A549 (cell line): ENCODE measurements at regions of chr11 and their contacts with region 1.

Region 1: GRCh38 chr11:45110562-45110961 is 35.9 kb upstream of the PRDM11 start:
- DNase-seq: peak; percentile 70 to 78
- ATAC-seq: peak; percentile 74 to 90; a peak in 5 of 6 replicates
- H3K4me3 ChIP-seq: no peak overlapping the region
- H3K27ac ChIP-seq: no peak overlapping the region
- H3K4me1 ChIP-seq: no peaks in the 10 kb centered on the region
- CTCF ChIP-seq: peak; percentile 81
- EP300 ChIP-seq: no peak
- POLR2A ChIP-seq: no peak
- RAD21 ChIP-seq: peak; percentile 91 to 93

Region 2: DNA sequence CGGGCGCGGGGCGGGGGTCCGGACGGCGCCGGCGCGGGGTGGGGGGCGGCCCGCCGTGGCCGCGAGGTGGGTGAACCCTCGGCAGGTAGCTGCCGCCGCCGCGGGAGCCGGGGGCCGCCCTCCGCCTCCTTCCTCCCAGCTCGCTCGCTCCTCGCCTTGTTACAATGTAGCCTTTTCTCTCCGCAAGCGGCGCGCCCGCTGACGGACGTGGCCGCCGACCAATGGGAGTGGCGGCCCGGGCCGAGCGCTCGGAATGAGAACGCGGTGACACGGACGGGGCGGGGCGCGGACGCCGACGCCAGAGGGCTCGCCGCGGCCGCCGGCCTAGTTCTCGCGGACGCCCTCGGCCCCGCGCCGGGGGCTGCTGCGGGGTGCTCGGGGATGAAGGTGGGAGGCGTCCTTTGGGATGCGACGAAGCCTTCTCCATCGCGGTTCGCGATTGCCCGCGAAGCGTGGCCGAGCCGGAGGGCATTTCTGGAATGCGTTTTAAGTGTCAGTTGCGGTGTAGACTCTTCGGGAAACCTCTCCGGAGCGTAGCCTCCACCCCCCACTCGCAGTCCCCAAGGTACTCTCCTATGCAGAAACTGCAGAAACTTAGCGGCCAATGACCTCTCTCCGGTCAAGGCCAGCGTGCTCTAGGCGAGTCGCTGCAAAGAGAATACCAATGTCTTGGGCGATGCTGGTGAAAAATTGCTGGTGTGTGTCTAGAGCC is 36.6 kb after region 1 on chr11:
- CTCF ChIA-PET with region 1: interaction called, 10 read pairs
- POLR2A ChIA-PET with region 1: interaction called, 3 read pairs
- DNase-seq: peak; percentile 96
- ATAC-seq: peak; percentile 94 to 99
- H3K4me3 ChIP-seq: peak overlapping the region; percentile 63
- H3K27ac ChIP-seq: peak overlapping the region; percentile 94 to 98
- H3K4me1 ChIP-seq: peaks cover 9% of the 10 kb centered on the region
- CTCF ChIP-seq: no peak
- EP300 ChIP-seq: no peak
- POLR2A ChIP-seq: peak; percentile 79
- RAD21 ChIP-seq: no peak

Region 3: GRCh38 chr11:45215098-45215865 is 104.7 kb after region 1 on chr11:
- CTCF ChIA-PET with region 1: interaction called, 10 read pairs
- POLR2A ChIA-PET with region 1: no interaction called
- DNase-seq: no peak
- ATAC-seq: no peak
- H3K4me3 ChIP-seq: no peak overlapping the region
- H3K27ac ChIP-seq: no peak overlapping the region
- H3K4me1 ChIP-seq: no peaks in the 10 kb centered on the region
- CTCF ChIP-seq: no peak
- EP300 ChIP-seq: no peak
- POLR2A ChIP-seq: no peak
- RAD21 ChIP-seq: no peak

Region 4: GRCh38 chr11:45252134-45252855 is 141.7 kb after region 1 on chr11:
- CTCF ChIA-PET with region 1: interaction called, 15 read pairs
- POLR2A ChIA-PET with region 1: no interaction called
- DNase-seq: peak; percentile 69 to 78
- ATAC-seq: peak; percentile 91 to 99
- H3K4me3 ChIP-seq: no peak overlapping the region
- H3K27ac ChIP-seq: 0 out of 6 replicates have a peak overlapping the region, but pooled peaks of 1 of the 2 experiments have one; percentile 29
- H3K4me1 ChIP-seq: 0 out of 3 replicates have a peak, but pooled peaks cover 6% of the 10 kb centered on the region
- CTCF ChIP-seq: peak; percentile 82
- EP300 ChIP-seq: no peak
- POLR2A ChIP-seq: no peak
- RAD21 ChIP-seq: peak; percentile 90 to 92

Region 5: DNA sequence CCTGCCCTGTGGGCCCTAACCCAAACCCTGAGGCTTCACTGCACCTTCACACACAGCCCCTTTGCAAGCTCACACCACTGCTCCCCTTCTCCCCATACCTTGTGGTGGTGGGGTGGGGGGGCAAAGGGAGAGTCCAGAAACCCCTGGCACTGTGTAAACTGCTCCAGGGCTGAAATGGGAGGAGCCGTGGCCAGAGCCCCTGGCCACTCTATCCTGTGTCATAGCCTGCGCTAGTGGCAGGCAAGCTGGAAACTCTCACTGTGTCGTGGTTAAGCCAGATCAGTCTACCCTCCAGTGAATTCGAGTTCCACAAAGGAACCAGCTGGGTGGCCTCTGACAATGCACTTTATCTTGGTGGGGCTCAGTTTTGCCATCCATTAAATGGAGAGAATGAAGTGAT is 183.9 kb after region 1 on chr11:
- CTCF ChIA-PET with region 1: interaction called, 64 read pairs
- POLR2A ChIA-PET with region 1: no interaction called
- DNase-seq: no peak
- ATAC-seq: no peak
- H3K4me3 ChIP-seq: no peak overlapping the region
- H3K27ac ChIP-seq: no peak overlapping the region
- H3K4me1 ChIP-seq: peaks cover 6% of the 10 kb centered on the region
- CTCF ChIP-seq: no peak
- EP300 ChIP-seq: no peak
- POLR2A ChIP-seq: no peak
- RAD21 ChIP-seq: no peak